A673 (cell line): ENCODE measurements at regions of chr10 and their contacts with region 1.

Region 1: DNA sequence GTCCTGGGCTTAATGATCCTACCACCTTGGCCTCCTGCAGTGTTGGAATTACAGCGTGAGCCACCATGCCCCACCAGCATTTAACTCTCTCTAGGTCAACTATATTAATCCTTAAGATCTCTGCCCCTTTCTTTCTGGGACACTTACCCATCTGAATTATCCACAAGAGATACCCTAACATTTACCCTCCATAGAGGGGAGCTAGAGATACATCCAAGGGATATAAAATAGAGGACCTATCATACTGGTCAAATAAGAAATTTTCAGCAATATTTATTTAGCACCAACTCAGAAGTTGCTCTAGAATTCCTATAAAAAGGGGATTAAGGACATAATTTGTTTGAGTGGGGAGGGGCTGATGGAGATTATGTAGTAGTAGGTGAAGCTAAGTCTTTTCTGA is 96.5 kb downstream of the OTUD1 start:
- DNase-seq: peak; percentile 58
- H3K4me3 ChIP-seq: no peak overlapping the region
- H3K27ac ChIP-seq: no peak overlapping the region
- H3K4me1 ChIP-seq: peaks cover 6% of the 10 kb centered on the region
- H3K27me3 ChIP-seq: no peaks in the 10 kb centered on the region
- CTCF ChIP-seq: peak; percentile 51; the same call in 1 of the 2 replicates

Region 2: GRCh38 chr10:22969704-22970103 is 565.7 kb before region 1 on chr10:
- CTCF ChIA-PET with region 1: no interaction called
- POLR2A ChIA-PET with region 1: no interaction called
- intact Hi-C with region 1: no loop called
- DNase-seq: no peak
- H3K4me3 ChIP-seq: no peak overlapping the region
- H3K27ac ChIP-seq: no peak overlapping the region
- H3K4me1 ChIP-seq: no peaks in the 10 kb centered on the region
- H3K27me3 ChIP-seq: peaks cover 6% of the 10 kb centered on the region
- CTCF ChIP-seq: no peak

Region 3: GRCh38 chr10:23694446-23694920 is 159.1 kb after region 1 on chr10:
- CTCF ChIA-PET with region 1: no interaction called
- POLR2A ChIA-PET with region 1: no interaction called
- intact Hi-C with region 1: loop called (anchors 5 kb)
- DNase-seq: peak; percentile 75
- H3K4me3 ChIP-seq: peak overlapping the region; percentile 70
- H3K27ac ChIP-seq: peak overlapping the region; percentile 28
- H3K4me1 ChIP-seq: peaks cover 18% of the 10 kb centered on the region
- H3K27me3 ChIP-seq: peaks cover 29% of the 10 kb centered on the region
- CTCF ChIP-seq: peak; percentile 3; the same call in 1 of the 2 replicates

Region 4: GRCh38 chr10:24311888-24312287 is 776.5 kb after region 1 on chr10:
- CTCF ChIA-PET with region 1: interaction called, 10 read pairs
- POLR2A ChIA-PET with region 1: no interaction called
- intact Hi-C with region 1: no loop called
- DNase-seq: no peak
- H3K4me3 ChIP-seq: no peak overlapping the region
- H3K27ac ChIP-seq: no peak overlapping the region
- H3K4me1 ChIP-seq: no peaks in the 10 kb centered on the region
- H3K27me3 ChIP-seq: no peaks in the 10 kb centered on the region
- CTCF ChIP-seq: no peak